ENCODE measurements at regions of chr15 and their contacts with region 1.

Region 1: DNA sequence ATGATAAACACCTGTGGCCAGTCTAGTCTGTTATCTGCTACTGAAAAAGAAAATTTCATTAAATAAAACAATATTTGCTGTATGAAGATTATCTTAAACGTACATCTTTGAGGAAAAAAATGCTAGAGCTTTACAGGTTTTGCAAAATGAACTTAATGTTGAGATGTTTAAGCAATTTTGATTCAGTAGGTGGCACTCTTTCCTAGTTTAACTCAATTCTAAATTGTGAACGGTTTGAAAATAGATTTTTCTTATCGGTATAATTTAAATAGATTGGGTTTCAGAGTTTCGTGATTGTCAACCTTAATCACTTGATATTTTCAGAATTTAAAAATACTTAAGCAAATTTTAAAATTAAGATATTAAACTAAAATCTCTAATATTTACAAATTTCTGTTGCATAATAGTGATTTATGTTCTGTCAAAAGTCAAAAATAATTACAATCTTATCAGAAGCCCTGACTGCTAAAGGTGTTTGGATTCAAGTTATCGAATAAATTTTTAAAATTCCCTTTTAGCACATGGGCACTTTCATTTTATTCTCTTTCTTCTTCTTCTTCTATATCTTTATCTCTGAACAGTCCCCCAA is 7.0 kb upstream of the RNF111 start:
- DNase-seq: peak in 2 of 3 donors; percentile 26 to 47
- H3K4me3 ChIP-seq: no peak overlapping the region
- H3K4me3 Mint-ChIP-seq: no peak overlapping the region
- H3K27ac ChIP-seq: no peak overlapping the region
- H3K27ac Mint-ChIP-seq: peak overlapping the region in 4 of 7 donors; percentile 2 to 73 (median 37)
- H3K4me1 ChIP-seq: peaks cover 80 to 95% of the 10 kb centered on the region in 2 donors
- H3K4me1 Mint-ChIP-seq: peaks cover 82% of the 10 kb centered on the region
- H3K27me3 ChIP-seq: no peaks in the 10 kb centered on the region
- H3K27me3 Mint-ChIP-seq: peaks cover 0 to 5% (median 0%) of the 10 kb centered on the region in 3 donors
- CTCF ChIP-seq: peak; percentile 75

Region 2: GRCh38 chr15:59059076-59059597 is 78.7 kb after region 1 on chr15:
- intact Hi-C with region 1: loop called in 1 of 2 experiments (anchors 5 kb)
- DNase-seq: no peak
- H3K4me3 ChIP-seq: no peak overlapping the region
- H3K4me3 Mint-ChIP-seq: no peak overlapping the region
- H3K27ac ChIP-seq: no peak overlapping the region
- H3K27ac Mint-ChIP-seq: no peak overlapping the region
- H3K4me1 ChIP-seq: no peaks in the 10 kb centered on the region
- H3K4me1 Mint-ChIP-seq: peaks cover 8% of the 10 kb centered on the region
- H3K27me3 ChIP-seq: no peaks in the 10 kb centered on the region
- H3K27me3 Mint-ChIP-seq: no peaks in the 10 kb centered on the region
- CTCF ChIP-seq: no peak

Measured in CD14-positive monocyte (primary cell).